Right lobe of liver (tissue), 6 donors: ENCODE measurements at regions of chr1 and their contacts with region 1.

Region 1: GRCh38 chr1:182595641-182596240 is 6.7 kb upstream of the RNASEL start:
- DNase-seq: peak; percentile 64 to 71 (median 67)
- ATAC-seq: peak; percentile 88 to 92 (median 90)
- H3K4me3 ChIP-seq: no peak overlapping the region
- H3K27ac ChIP-seq: no peak overlapping the region
- H3K4me1 ChIP-seq: no peaks in the 10 kb centered on the region
- H3K27me3 ChIP-seq: no peaks in the 10 kb centered on the region
- CTCF ChIP-seq: peak; percentile 84 to 91 (median 90)
- POLR2A ChIP-seq: no peak

Region 2: GRCh38 chr1:182446033-182446669 is 149.6 kb before region 1 on chr1:
- intact Hi-C with region 1: loop called in 1 of 2 experiments (anchors 10 kb)
- DNase-seq: no peak
- ATAC-seq: peak; percentile 92 to 97 (median 96)
- H3K4me3 ChIP-seq: no peak overlapping the region
- H3K27ac ChIP-seq: no peak overlapping the region
- H3K4me1 ChIP-seq: peaks cover 0 to 4% (median 0%) of the 10 kb centered on the region in 4 donors
- H3K27me3 ChIP-seq: no peaks in the 10 kb centered on the region
- CTCF ChIP-seq: peak; percentile 65 to 80 (median 75)
- POLR2A ChIP-seq: no peak

Region 3: DNA sequence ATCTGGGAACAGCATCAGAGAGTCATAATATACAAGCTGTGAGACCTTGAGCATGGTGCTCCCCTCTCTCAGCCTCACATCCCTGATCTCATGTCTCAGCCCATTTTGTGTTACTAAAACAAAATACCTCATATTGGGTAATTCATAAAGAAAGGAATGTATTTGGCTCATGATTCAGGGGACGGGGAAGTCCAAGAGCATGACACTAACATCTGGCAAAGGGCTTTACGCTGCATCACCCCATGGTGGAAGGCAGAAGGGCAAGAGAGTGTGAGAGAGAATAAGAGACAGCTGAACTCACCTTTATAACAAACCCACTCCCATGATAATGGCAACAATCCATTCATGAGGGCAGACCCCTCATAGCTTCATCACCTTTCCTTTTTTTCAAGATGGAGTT is 43.2 kb before region 1 on chr1:
- intact Hi-C with region 1: no loop called
- DNase-seq: no peak
- ATAC-seq: no peak
- H3K4me3 ChIP-seq: no peak overlapping the region
- H3K27ac ChIP-seq: no peak overlapping the region
- H3K4me1 ChIP-seq: no peaks in the 10 kb centered on the region
- H3K27me3 ChIP-seq: no peaks in the 10 kb centered on the region
- CTCF ChIP-seq: no peak
- POLR2A ChIP-seq: no peak

Region 4: GRCh38 chr1:182781841-182782586 is 186.3 kb after region 1 on chr1:
- intact Hi-C with region 1: loop called (anchors 2 to 5 kb)
- DNase-seq: peak; percentile 60 to 71 (median 71)
- ATAC-seq: peak; percentile 78 to 83 (median 82)
- H3K4me3 ChIP-seq: no peak overlapping the region
- H3K27ac ChIP-seq: no peak overlapping the region
- H3K4me1 ChIP-seq: no peaks in the 10 kb centered on the region
- H3K27me3 ChIP-seq: no peaks in the 10 kb centered on the region
- CTCF ChIP-seq: peak; percentile 52 to 70 (median 62)
- POLR2A ChIP-seq: no peak